Heart right ventricle (tissue), 16 donors: ENCODE measurements at regions of chr9 and their contacts with region 1.

Region 1: GRCh38 chr9:70340572-70340971 is 73.9 kb downstream of the KLF9 start:
- DNase-seq: no peak
- ATAC-seq: no peak
- H3K4me3 ChIP-seq: no peak overlapping the region
- H3K27ac ChIP-seq: no peak overlapping the region
- H3K4me1 ChIP-seq: peaks cover 0 to 8% (median 0%) of the 10 kb centered on the region in 9 donors
- H3K27me3 ChIP-seq: no peaks in the 10 kb centered on the region
- CTCF ChIP-seq: peak in 7 of 9 donors; percentile 48 to 71 (median 66)

Region 2: GRCh38 chr9:70392189-70392588 is 51.6 kb after region 1 on chr9:
- intact Hi-C with region 1: loop called in 2 of 10 experiments (anchors 5 to 10 kb)
- DNase-seq: no peak
- ATAC-seq: peak in 6 of 8 donors; percentile 28 to 53 (median 40)
- H3K4me3 ChIP-seq: no peak overlapping the region
- H3K27ac ChIP-seq: peak overlapping the region in 8 of 10 donors; percentile 7 to 66 (median 36)
- H3K4me1 ChIP-seq: peaks cover 36 to 100% (median 80%) of the 10 kb centered on the region in 9 donors
- H3K27me3 ChIP-seq: no peaks in the 10 kb centered on the region
- CTCF ChIP-seq: peak in 6 of 9 donors; percentile 19 to 55 (median 42)

Region 3: GRCh38 chr9:70398145-70398556 is 57.6 kb after region 1 on chr9:
- intact Hi-C with region 1: loop called in 2 of 10 experiments (anchors 5 to 10 kb)
- DNase-seq: no peak
- ATAC-seq: peak; percentile 37 to 85 (median 54)
- H3K4me3 ChIP-seq: no peak overlapping the region
- H3K27ac ChIP-seq: peak overlapping the region in 9 of 10 donors; percentile 23 to 72 (median 50)
- H3K4me1 ChIP-seq: peaks cover 29 to 100% (median 98%) of the 10 kb centered on the region in 9 donors
- H3K27me3 ChIP-seq: no peaks in the 10 kb centered on the region
- CTCF ChIP-seq: no peak